OCI-LY7 (cell line): ENCODE measurements at regions of chr6 and their contacts with region 1.

Region 1: GRCh38 chr6:108835218-108835850 is 12.9 kb upstream of the ARMC2 start:
- DNase-seq: peak; percentile 81
- H3K4me3 ChIP-seq: no peak overlapping the region
- H3K27ac ChIP-seq: no peak overlapping the region
- H3K4me1 ChIP-seq: peaks cover 17% of the 10 kb centered on the region
- CTCF ChIP-seq: peak; percentile 93

Region 2: GRCh38 chr6:107691062-107691751 is 1144.1 kb before region 1 on chr6:
- CTCF ChIA-PET with region 1: no interaction called
- POLR2A ChIA-PET with region 1: no interaction called
- intact Hi-C with region 1: no loop called
- DNase-seq: no peak
- H3K4me3 ChIP-seq: no peak overlapping the region
- H3K27ac ChIP-seq: no peak overlapping the region
- H3K4me1 ChIP-seq: no peaks in the 10 kb centered on the region
- CTCF ChIP-seq: no peak

Region 3: GRCh38 chr6:108541838-108542759 is 293.2 kb before region 1 on chr6:
- CTCF ChIA-PET with region 1: no interaction called
- POLR2A ChIA-PET with region 1: no interaction called
- intact Hi-C with region 1: loop called (anchors 1 kb)
- DNase-seq: peak; percentile 93
- H3K4me3 ChIP-seq: peak overlapping the region; percentile 33
- H3K27ac ChIP-seq: peak overlapping the region; percentile 57
- H3K4me1 ChIP-seq: peaks cover 24% of the 10 kb centered on the region
- CTCF ChIP-seq: peak; percentile 98

Region 4: GRCh38 chr6:108558372-108559096 is 276.8 kb before region 1 on chr6:
- CTCF ChIA-PET with region 1: no interaction called
- POLR2A ChIA-PET with region 1: no interaction called
- intact Hi-C with region 1: loop called (anchors 1 kb)
- DNase-seq: peak; percentile 99
- H3K4me3 ChIP-seq: peak overlapping the region; percentile 91
- H3K27ac ChIP-seq: peak overlapping the region; percentile 64
- H3K4me1 ChIP-seq: peaks cover 12% of the 10 kb centered on the region
- CTCF ChIP-seq: 0 out of 2 replicates have a peak, but pooled peaks have one; percentile 3

Region 5: GRCh38 chr6:108782179-108783041 is 52.9 kb before region 1 on chr6:
- CTCF ChIA-PET with region 1: no interaction called
- POLR2A ChIA-PET with region 1: interaction called, 6 read pairs
- intact Hi-C with region 1: loop called (anchors 2 kb)
- DNase-seq: peak; percentile 80
- H3K4me3 ChIP-seq: peak overlapping the region; percentile 48
- H3K27ac ChIP-seq: no peak overlapping the region
- H3K4me1 ChIP-seq: peaks cover 17% of the 10 kb centered on the region
- CTCF ChIP-seq: peak; percentile 90

Region 6: DNA sequence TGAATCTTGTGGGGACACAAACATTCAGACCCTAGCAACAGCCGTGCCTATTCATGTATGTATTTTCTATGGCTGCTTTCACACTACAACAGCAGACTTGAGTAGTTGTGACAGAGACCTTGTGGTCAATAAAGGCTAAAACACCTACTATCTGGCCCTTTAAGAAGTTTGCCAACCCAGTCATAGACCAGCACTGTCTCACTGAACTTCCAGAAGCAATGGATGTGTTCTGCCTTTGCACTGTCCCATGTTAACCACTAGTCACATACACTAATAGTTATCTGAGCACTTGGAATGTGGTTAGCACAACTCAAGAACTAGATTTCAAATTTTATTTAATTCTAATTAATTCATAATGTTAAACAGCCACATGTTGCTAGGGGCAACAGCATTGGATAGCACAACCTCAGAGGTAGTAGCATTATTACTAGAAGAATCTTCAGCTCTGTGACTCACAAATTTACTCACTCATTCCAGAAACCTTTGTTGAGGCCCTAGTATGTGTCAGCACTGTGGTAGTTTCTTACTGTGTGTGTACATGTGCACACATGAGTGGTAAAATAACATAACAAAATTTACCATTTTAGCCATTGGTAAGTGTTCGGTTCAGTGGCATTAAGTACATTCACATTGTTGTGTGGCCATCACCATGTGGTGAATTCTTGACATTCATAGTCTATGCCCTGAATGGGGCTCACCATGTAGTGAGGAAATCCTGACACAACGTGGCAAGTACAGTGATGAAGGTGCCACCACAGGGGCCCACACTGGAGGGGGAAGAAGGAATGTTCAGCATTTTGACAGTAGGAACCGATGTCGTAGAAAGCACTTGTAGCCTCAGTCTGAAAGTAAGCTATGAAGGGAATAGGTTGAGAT is 367.3 kb after region 1 on chr6:
- CTCF ChIA-PET with region 1: no interaction called
- POLR2A ChIA-PET with region 1: no interaction called
- intact Hi-C with region 1: loop called (anchors 10 kb)
- DNase-seq: no peak
- H3K4me3 ChIP-seq: no peak overlapping the region
- H3K27ac ChIP-seq: no peak overlapping the region
- H3K4me1 ChIP-seq: no peaks in the 10 kb centered on the region
- CTCF ChIP-seq: no peak